GM10248 (cell line): ENCODE measurements at regions of chr1 and their contacts with region 1.

Region 1: DNA sequence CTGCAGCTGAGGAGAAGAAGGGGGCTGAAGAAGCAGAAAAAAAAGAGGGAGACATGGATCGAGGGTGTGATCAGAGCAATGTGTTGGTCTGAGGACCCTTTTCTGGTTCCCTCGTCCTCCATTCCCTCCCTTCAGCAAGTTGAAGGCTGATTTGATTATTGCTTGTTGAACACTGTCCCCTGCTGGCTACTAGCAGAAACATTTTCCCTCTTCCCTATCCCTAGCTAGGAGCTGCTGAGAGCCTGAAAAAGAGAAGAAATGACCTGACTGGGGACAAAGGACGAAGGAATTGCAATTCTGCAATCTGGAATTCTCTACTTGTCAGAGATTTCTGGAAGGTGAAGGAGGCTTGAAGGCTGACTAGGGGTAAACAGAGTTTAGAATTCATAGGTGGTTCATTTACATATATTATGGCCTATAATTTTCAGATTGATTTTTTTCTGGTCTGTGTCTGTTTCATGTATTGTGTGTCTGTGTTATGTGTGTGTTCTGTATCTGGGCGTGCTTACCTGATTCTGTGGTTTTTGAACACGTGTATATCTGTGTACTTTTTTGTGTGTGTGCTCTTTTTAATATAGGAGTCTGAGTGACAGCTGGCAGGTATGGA is 9.8 kb downstream of the NHLH1 start:
- DNase-seq: peak; percentile 73
- CTCF ChIP-seq: peak; percentile 91

Region 2: DNA sequence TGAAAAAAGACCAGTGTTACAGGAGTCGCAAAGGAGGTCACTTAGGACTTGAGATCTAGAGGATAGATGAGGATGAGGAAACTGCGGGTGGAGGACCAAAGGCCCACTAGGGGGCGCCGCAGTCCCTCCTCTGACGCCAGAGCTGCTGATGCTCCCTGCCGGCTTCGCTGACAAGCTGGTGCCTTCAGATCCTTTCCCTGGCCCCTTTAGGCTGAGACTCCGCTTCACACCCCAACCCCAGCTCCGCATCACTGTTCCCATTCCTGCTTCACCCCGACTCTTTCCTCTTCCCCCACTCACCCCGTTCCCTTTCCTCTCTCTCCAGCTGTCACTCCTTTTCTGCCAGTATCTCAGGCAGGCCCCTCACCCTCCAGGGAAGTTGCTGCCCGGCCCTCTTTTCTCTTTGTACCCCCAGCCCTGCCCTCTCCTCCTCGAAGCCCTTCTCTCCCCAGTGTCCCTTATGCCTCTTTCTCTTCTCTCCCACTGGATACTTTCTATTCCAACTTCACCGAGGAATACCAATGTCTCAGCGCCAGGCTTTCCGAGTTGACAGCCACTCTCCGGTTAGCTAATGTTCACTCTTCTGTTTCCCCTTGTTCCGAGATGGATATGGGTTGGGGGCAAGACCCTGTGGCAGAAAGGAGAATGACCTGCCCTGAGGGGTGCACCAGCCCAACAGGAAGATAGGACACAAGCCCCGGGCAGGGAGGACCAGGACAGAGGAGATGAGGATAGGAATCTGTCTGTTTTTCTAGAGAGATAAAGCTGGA is 290.8 kb before region 1 on chr1:
- CTCF ChIA-PET with region 1: interaction called, 22 read pairs
- POLR2A ChIA-PET with region 1: no interaction called
- DNase-seq: peak; percentile 89
- CTCF ChIP-seq: peak; percentile 71

Region 3: GRCh38 chr1:160108888-160109662 is 267.6 kb before region 1 on chr1:
- CTCF ChIA-PET with region 1: interaction called, 125 read pairs
- POLR2A ChIA-PET with region 1: no interaction called
- DNase-seq: peak; percentile 60
- CTCF ChIP-seq: peak; percentile 35

Region 4: GRCh38 chr1:160328184-160328583 is 48.4 kb before region 1 on chr1:
- CTCF ChIA-PET with region 1: interaction called, 12 read pairs
- POLR2A ChIA-PET with region 1: no interaction called
- DNase-seq: no peak
- CTCF ChIP-seq: no peak

Region 5: GRCh38 chr1:160362168-160362957 is 14.3 kb before region 1 on chr1:
- CTCF ChIA-PET with region 1: interaction called, 78 read pairs
- POLR2A ChIA-PET with region 1: no interaction called
- DNase-seq: no peak
- CTCF ChIP-seq: no peak